ENCODE measurements at regions of chr6 and their contacts with region 1.

Region 1: GRCh38 chr6:106574741-106575458 is 54.4 kb downstream of the RTN4IP1 start:
- DNase-seq: peak; percentile 77
- ATAC-seq: peak; percentile 90
- H3K4me3 ChIP-seq: no peak overlapping the region
- H3K27ac ChIP-seq: peak overlapping the region; percentile 5
- H3K4me1 ChIP-seq: peaks cover 12% of the 10 kb centered on the region
- H3K27me3 ChIP-seq: no peaks in the 10 kb centered on the region
- CTCF ChIP-seq: no peak

Region 2: GRCh38 chr6:106591111-106591825 is 16.4 kb after region 1 on chr6:
- CTCF ChIA-PET with region 1: no interaction called
- POLR2A ChIA-PET with region 1: no interaction called
- intact Hi-C with region 1: loop called (anchors 2 kb)
- DNase-seq: peak; percentile 77
- ATAC-seq: peak; percentile 99
- H3K4me3 ChIP-seq: no peak overlapping the region
- H3K27ac ChIP-seq: peak overlapping the region; percentile 72
- H3K4me1 ChIP-seq: peaks cover 18% of the 10 kb centered on the region
- H3K27me3 ChIP-seq: no peaks in the 10 kb centered on the region
- CTCF ChIP-seq: no peak